ENCODE measurements at regions of chr2 and their contacts with region 1.

Region 1: DNA sequence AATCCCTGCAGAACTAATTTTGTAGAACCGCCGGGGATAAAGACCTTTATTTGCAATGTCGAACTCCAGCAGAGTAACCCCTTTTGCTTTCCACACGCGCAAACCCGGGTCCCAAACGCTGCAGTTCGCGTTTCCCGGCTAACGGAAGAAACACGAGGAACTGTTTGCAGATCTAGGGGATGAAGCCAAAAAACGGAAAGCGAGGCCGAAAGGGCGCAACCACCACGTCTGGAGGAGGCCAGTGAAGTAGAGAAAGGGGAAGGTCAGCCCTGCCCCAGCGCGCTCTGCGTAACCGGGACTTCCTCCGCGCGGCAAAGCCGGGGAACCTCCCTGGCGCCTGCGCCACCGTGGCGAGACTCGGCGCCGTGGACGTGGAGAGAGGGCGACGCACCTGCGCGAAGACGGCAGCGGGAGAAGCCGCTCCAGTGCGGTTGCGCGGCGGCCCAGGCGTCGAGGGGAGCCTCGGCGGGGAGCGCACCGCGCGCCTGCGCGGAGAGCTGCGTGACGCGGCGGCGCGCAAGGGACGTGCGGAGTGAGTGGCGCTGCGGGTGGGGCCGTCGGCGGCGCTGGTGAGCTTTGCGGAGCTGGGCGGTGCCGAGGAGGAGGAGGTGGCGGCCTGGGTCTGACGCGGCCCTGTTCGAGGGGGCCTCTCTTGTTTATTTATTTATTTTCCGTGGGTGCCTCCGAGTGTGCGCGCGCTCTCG is at the start of gene PPP1CB:
- DNase-seq: peak; percentile 96
- H3K4me3 Mint-ChIP-seq: peak within 1 kb of the TSS; percentile 91
- H3K27ac Mint-ChIP-seq: peak within 1 kb of the TSS; percentile 94
- H3K4me1 Mint-ChIP-seq: peaks cover 57% of the 10 kb centered on the region
- H3K27me3 Mint-ChIP-seq: no peaks in the 10 kb centered on the region
- total RNA-seq, gene PPP1CB: 211 to 213 TPM

Region 2: GRCh38 chr2:28527196-28527595 is 224.2 kb before region 1 on chr2:
- CTCF ChIA-PET with region 1: no interaction called
- POLR2A ChIA-PET with region 1: no interaction called
- DNase-seq: no peak
- H3K4me3 Mint-ChIP-seq: no peak overlapping the region
- H3K27ac Mint-ChIP-seq: no peak overlapping the region
- H3K4me1 Mint-ChIP-seq: peaks cover 9% of the 10 kb centered on the region
- H3K27me3 Mint-ChIP-seq: peaks cover 34% of the 10 kb centered on the region

Region 3: GRCh38 chr2:28610583-28611201 is 140.7 kb before region 1 on chr2:
- CTCF ChIA-PET with region 1: interaction called, 5 read pairs
- POLR2A ChIA-PET with region 1: interaction called, 48 read pairs
- DNase-seq: peak; percentile 68
- H3K4me3 Mint-ChIP-seq: peak overlapping the region; percentile 28
- H3K27ac Mint-ChIP-seq: peak overlapping the region; percentile 50
- H3K4me1 Mint-ChIP-seq: peaks cover 32% of the 10 kb centered on the region
- H3K27me3 Mint-ChIP-seq: no peaks in the 10 kb centered on the region

Measured in activated CD4-positive, alpha-beta memory T cell treated with anti-CD3 and anti-CD28 coated beads, Interleukin-2, amount 10 ng/mL, durations not matched to agents 7 days and 5 days (primary cell).